ENCODE measurements at regions of chr12 and their contacts with region 1.

Region 1: DNA sequence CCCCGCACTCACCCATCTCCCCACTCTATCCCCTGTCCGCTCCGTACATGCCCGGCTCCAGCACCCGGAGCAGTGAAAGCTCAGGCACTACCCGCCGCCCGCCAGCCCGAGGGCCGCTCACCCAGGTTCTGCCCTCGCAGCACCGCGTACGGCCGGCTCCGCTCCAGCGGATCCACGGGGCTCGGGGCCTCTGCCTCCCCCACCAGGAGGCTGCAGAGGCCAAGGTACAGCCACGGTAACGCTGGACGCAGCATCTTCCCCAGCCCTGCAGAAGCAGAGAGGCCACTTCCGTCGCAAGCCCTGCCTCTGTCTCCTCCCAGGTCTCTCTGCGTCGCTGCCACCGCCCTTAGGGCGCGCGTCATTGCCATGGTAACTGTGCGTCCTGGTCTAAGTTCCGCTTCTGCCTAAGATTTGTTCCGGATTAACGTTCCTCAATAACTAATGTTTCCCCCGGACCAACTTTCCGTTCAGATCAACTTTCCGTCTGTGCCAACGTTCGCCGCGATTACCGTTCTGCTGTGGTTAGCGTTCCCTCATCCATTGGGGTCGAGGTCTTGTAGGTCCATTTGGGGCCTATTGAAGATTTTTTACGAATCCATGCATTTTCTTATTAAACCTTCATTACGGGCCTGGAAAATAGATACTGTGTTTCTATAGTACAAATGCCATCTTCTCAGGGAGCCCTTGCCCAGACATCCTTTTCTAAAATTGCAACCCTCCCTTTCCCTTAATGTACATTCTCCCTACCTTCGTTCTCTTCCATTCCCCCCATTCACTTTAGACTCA is at the start of gene C12orf76:
- DNase-seq: peak; percentile 96
- H3K4me3 Mint-ChIP-seq: peak within 1 kb of the TSS; percentile 83
- H3K27ac Mint-ChIP-seq: peak within 1 kb of the TSS; percentile 87
- H3K4me1 Mint-ChIP-seq: peaks cover 28% of the 10 kb centered on the region
- H3K27me3 Mint-ChIP-seq: no peaks in the 10 kb centered on the region
- total RNA-seq, gene C12orf76: 12.1 to 12.9 TPM

Region 2: GRCh38 chr12:109899783-109900751 is 148.4 kb before region 1 on chr12 and contains the start of gene TCHP:
- CTCF ChIA-PET with region 1: no interaction called
- intact Hi-C with region 1: loop called (anchors 1 kb)
- DNase-seq: peak; percentile 86
- H3K4me3 Mint-ChIP-seq: peak within 1 kb of the TSS; percentile 94
- H3K27ac Mint-ChIP-seq: peak within 1 kb of the TSS; percentile 97
- H3K4me1 Mint-ChIP-seq: peaks cover 21% of the 10 kb centered on the region
- H3K27me3 Mint-ChIP-seq: no peaks in the 10 kb centered on the region
- total RNA-seq, gene TCHP: 19.6 to 20.9 TPM

Region 3: DNA sequence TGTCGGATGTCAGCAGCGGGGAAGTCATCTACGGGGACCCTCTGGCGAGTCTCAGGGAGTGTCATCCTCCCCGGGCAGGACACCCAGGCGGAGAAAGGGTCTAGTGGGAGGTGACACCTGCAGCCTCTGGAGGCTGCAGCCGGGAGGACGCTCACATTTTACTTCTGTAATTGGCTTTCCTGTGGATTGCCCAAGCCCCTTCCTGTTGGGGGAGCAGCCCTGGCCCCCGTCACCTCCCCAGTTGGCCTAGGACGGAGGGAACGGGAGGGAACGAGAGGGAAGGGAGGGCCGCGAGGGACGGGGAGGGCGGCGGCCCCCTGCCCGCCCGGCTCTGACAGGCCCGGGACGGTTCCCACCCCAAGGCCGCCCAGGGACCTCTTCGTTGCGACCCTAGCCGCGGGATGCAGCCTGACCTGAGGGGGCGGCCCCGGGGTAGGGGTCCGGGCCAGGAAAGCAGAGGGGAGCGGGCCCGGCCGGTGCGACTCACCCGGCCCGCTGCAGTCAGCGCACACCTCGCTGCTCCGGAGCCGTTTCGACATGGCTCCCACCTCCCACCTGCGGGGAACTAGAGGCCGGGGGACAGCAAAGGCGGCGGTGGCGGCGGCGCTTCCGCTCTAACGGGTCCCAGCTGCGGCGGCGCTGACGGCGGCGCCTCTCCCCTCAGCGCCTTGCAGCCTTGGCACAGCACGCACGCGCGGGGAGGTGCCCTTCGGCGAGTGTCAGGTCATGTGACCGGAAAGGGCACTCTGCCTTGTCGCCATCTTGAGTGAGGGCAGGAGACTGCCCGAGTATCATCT is 52.6 kb before region 1 on chr12 and contains the start of gene GIT2:
- CTCF ChIA-PET with region 1: interaction called, 5 read pairs
- intact Hi-C with region 1: loop called (anchors 1 kb)
- DNase-seq: peak; percentile 96
- H3K4me3 Mint-ChIP-seq: peak within 1 kb of the TSS; percentile 94
- H3K27ac Mint-ChIP-seq: peak within 1 kb of the TSS; percentile 93
- H3K4me1 Mint-ChIP-seq: peaks cover 54% of the 10 kb centered on the region
- H3K27me3 Mint-ChIP-seq: no peaks in the 10 kb centered on the region
- total RNA-seq, gene GIT2: 40.2 to 41.6 TPM

Region 4: DNA sequence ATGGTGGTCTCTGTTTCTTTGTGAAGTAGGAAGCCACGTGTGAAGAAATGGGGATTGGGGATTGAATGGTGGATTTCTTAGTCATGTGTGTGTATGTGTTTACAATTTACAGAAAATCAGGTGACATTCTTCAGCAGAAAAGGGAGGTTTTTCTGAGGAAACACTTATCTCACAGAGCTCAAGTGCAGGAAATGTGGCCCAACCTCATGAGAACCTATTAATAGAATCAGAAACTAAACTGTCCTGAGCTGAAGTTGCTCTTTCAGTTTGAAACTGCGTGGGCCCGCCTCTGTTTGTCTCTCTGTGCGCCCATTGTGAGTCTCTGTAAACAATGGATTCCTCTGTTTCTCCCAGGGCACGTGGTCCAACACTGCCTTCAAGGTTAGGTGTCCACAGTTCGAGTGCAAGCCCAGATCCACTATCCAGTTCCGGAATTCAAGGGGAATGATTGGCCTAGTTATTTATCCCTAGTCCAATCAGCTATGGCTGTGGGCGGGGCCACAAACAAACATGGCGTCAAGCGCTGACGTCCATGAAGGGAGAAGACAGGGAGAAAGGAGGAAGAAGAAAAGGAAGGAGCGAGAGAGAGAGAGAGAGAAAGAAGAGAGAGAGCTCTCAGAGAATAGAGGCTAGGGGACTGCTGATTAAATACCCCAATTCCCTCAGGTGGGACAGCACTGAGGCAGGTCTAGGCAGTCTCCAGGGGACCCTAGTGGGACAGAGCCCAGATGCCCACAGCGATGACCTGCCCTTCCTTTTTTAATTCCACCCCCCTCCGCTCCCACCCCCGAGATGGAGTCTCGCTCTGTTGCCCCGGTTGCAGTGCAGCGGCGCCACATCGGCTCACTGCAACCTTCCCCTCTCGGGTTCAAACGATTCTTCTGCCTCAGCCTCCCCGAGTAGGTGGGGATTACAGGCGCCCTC is 31.3 kb after region 1 on chr12:
- CTCF ChIA-PET with region 1: no interaction called
- intact Hi-C with region 1: loop called (anchors 1 kb)
- DNase-seq: peak; percentile 79
- H3K4me3 Mint-ChIP-seq: peak overlapping the region; percentile 42
- H3K27ac Mint-ChIP-seq: peak overlapping the region; percentile 89
- H3K4me1 Mint-ChIP-seq: peaks cover 13% of the 10 kb centered on the region
- H3K27me3 Mint-ChIP-seq: no peaks in the 10 kb centered on the region

Region 5: DNA sequence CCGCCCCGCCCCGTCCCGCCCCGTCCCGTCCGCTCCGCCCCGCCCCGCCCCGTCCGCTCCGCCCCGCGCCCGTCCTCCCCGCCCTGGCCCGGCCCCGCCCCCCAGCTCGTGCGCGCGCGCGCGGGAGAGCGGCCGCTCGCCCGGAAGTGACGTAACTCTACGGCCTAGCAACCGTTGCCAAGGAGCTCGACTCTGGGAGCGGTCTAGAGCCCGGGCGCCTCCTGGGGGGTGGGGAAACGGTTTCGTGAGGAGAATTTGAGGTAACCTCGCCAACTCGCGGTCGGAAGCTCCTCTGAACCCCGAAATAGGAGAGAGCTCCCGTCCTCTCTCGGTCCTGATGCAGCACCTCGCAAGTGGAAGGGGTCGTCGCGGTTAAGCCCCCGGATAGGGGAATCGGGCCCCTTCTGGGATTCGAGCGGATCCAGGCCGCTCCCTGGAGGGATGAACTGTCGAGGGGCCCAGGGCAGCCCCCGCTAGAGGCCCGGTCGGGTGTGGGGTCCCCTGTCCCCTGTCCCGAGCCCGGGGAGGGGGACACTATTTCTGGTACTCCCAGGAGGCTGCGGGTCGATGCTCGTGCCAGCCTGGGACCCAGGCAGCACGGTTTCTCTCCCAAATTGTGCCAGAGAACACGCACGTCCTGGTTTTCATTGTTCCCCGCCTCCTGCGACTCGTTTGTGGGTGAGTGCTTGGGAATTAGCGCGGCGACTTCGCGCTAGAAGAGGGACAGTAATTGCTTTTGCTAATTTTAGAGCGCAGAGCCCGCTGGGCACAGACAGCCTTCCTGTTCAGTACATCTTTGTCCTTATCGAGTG is 76.0 kb after region 1 on chr12 and contains the start of gene IFT81:
- CTCF ChIA-PET with region 1: interaction called, 4 read pairs
- intact Hi-C with region 1: loop called (anchors 1 kb)
- DNase-seq: peak; percentile 95
- H3K4me3 Mint-ChIP-seq: peak within 1 kb of the TSS; percentile 89
- H3K27ac Mint-ChIP-seq: no peak within 1 kb of the TSS
- H3K4me1 Mint-ChIP-seq: peaks cover 7% of the 10 kb centered on the region
- H3K27me3 Mint-ChIP-seq: peaks cover 2% of the 10 kb centered on the region
- total RNA-seq, gene IFT81: 1.7 to 2.2 TPM